Mammary epithelial cell (primary cell): ENCODE measurements at regions of chr5 and their contacts with region 1.

Region 1: DNA sequence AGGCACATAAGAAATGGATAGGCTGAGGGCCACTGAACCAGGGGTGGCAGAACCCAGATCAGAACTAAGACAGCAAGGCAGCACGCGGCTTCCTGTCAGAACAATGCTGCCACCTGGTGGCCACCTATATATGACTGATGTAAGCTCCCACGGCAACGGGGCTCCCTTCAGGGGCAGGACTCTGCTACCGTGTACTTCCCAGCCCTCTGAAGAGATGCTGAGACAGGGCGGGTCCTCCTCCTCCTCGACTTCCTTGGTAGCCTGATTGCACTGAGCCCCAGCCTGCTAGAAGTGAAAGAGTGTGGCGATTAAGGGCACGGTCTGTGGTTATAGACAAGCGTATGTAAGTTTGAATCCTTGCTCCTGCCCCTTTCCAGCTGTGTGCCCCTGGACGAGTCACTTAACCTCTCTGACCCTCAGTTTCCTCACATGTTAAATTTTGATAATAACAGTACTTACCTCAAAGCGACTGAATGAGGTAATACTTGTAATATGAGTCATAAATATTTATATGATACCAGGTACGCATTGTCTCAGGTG is 13.3 kb downstream of the RPS14 start:
- DNase-seq: peak; percentile 73
- H3K4me3 ChIP-seq: no peak overlapping the region
- H3K27ac ChIP-seq: no peak overlapping the region
- H3K4me1 ChIP-seq: peaks cover 9% of the 10 kb centered on the region
- H3K27me3 ChIP-seq: no peaks in the 10 kb centered on the region
- CTCF ChIP-seq: peak; percentile 74 to 84

Region 2: GRCh38 chr5:150000256-150000989 is 435.8 kb before region 1 on chr5 and contains the starts of genes HMGXB3 and TIGD6:
- CTCF ChIA-PET with region 1: no interaction called
- dilution Hi-C with region 1: no loop called
- in situ Hi-C with region 1: no loop called
- intact Hi-C with region 1: loop called (anchors 10 kb)
- DNase-seq: peak; percentile 93
- H3K4me3 ChIP-seq: peak within 1 kb of the TSS; percentile 60 to 92 (median 86)
- H3K27ac ChIP-seq: peak within 1 kb of the TSS; percentile 86
- H3K4me1 ChIP-seq: peaks cover 16% of the 10 kb centered on the region
- H3K27me3 ChIP-seq: no peaks in the 10 kb centered on the region
- CTCF ChIP-seq: peak in 1 of 2 donors; percentile 8
- total RNA-seq, gene HMGXB3: 46.7 to 60.0 TPM
- total RNA-seq, gene TIGD6: 5.8 to 6.0 TPM

Region 3: GRCh38 chr5:150155258-150156026 is 280.8 kb before region 1 on chr5 and contains the start of gene PDGFRB:
- CTCF ChIA-PET with region 1: no interaction called
- dilution Hi-C with region 1: no loop called
- in situ Hi-C with region 1: loop called in 1 of 2 experiments (anchors 10 kb)
- intact Hi-C with region 1: no loop called
- DNase-seq: no peak
- H3K4me3 ChIP-seq: peak within 1 kb of the TSS in 2 of 3 experiments; percentile 12 to 23
- H3K27ac ChIP-seq: no peak within 1 kb of the TSS
- H3K4me1 ChIP-seq: peaks cover 5% of the 10 kb centered on the region
- H3K27me3 ChIP-seq: no peaks in the 10 kb centered on the region
- CTCF ChIP-seq: no peak
- total RNA-seq, gene PDGFRB: 1.5 TPM in 1 of 2 donors, not detected in the other

Region 4: DNA sequence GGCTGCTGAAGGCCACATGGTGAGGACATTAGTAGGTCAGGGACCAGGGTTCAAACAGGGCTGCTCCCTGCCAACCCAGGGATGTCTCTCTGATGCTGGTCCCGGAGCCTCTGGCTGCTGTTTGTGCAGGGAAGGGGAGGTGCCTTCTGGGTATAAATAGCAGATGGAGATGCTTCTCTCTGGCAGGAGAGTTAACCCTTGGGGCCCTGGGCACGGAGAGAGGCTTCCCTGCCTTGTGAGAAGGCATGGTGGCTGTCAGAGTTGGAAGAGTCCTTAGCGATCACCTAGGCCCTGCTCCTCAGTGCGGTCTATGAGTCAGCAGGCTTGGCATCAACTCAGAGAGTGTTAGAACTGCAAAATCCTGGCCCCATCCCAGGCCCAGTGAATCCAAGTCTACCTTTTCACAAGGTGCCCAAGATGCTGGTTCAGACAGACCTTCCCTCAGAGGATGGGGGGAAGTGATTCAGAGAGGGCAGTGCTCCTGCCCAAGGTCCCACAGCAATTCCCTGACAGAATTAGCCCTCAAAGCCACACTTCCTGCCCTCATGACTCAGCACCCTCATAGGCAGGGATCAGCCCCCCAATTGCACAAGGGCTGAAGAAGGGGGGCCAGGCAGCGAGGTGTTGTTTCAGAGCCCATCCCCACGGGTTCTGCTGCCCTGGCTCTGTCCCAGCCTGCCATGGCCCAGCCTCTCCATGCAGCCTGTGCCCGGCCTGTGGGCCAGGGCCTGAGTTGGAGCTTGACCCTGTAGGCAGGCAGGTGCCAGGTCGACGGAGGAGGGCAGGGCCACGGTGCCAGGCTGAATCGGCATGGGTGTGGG is 172.2 kb before region 1 on chr5:
- CTCF ChIA-PET with region 1: no interaction called
- dilution Hi-C with region 1: no loop called
- in situ Hi-C with region 1: loop called in 1 of 2 experiments (anchors 5 kb)
- intact Hi-C with region 1: no loop called
- DNase-seq: peak; percentile 98
- H3K4me3 ChIP-seq: no peak overlapping the region
- H3K27ac ChIP-seq: no peak overlapping the region
- H3K4me1 ChIP-seq: peaks cover 30% of the 10 kb centered on the region
- H3K27me3 ChIP-seq: no peaks in the 10 kb centered on the region
- CTCF ChIP-seq: no peak

Region 5: DNA sequence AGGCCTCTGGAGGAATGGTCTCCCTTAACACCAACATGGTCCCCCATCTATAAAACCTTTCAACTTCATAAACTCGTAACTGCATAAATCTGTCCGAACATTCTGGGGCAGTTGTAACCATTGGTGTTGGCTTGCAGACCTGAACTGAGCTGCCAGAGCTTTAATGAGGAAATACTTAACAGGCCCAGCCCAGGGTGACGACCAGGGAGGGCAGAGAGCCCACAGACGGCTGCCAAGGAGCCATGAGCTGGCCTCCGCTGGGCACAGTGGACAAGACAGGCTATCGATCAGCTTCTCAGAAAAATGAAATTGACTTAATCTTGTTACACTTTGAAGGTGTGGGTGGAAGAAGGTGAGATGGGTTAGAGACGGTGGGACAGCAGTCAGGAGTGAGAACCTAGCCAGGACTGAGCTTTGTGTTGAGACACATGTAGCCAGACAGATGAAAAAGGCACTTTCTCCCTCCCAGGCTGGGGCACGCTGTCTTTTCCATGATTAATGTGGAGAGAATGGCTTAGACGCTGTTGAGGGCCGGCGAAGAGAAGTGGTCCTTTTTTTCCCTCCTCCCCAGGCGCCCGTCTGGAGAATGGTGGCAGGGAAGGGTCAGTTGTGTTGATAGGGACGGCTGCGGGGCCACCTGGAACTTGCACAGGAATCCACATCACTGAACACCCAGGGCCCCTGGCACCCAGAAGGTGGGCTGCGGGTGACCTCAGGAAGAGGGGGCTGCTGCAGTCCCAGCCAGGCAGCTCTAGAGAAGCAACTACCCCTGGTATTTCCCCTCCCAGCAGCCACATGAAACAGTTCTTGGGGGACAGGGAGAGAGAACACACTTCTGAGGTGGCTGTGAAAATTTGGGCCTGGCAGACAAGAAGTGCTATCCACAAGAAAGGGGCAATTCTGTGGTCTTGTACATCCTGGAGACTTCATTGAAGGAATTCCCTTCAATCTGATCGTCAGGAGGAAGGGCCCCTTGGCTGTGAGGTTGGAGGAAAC is 106.0 kb before region 1 on chr5:
- CTCF ChIA-PET with region 1: no interaction called
- dilution Hi-C with region 1: no loop called
- in situ Hi-C with region 1: no loop called
- intact Hi-C with region 1: no loop called
- DNase-seq: no peak
- H3K4me3 ChIP-seq: no peak overlapping the region
- H3K27ac ChIP-seq: no peak overlapping the region
- H3K4me1 ChIP-seq: no peaks in the 10 kb centered on the region
- H3K27me3 ChIP-seq: no peaks in the 10 kb centered on the region
- CTCF ChIP-seq: no peak

Region 6: DNA sequence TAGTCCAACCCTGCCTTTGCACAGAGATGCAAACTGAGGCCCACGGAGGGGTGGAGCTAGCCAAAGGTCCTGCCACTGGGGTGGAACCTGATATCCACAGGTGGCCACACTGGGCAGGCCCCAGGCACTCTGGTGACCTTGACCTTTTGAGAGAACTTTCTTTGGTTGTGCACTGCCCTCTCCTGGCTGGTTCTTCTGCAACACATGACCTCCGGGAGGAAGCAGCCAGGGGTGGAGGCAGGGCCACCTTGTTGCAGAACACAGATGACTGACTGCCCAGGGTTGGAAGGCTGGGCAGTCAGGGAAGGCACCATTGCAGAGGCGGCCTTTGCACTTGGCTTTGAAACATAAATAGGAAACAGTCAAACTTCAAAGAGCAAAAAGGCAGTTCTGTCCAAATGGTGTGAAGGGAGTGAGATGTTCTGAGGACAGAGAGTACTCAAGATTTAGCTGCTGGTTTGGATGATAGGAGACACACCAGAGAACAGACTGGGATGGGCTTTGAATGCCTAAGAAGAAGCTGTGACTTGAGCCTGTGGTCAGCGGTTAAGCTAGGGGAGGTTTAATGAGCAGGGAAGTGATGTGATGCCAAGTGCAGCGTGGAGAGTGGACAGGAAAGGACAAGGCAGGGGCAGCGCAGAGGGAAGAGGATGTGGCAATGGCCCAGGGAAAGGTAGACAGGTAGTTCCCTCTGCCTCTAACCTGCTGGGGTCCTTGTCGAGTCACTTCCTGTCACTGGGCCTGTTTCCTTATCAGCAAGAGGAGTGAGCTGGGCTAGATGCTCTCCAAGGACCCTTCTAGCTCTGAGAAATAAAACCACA is 85.5 kb before region 1 on chr5:
- CTCF ChIA-PET with region 1: interaction called, 4 read pairs
- dilution Hi-C with region 1: no loop called
- in situ Hi-C with region 1: no loop called
- intact Hi-C with region 1: loop called (anchors 1 kb)
- DNase-seq: peak; percentile 55
- H3K4me3 ChIP-seq: no peak overlapping the region
- H3K27ac ChIP-seq: no peak overlapping the region
- H3K4me1 ChIP-seq: peaks cover 10% of the 10 kb centered on the region
- H3K27me3 ChIP-seq: no peaks in the 10 kb centered on the region
- CTCF ChIP-seq: peak; percentile 57 to 84

Region 7: DNA sequence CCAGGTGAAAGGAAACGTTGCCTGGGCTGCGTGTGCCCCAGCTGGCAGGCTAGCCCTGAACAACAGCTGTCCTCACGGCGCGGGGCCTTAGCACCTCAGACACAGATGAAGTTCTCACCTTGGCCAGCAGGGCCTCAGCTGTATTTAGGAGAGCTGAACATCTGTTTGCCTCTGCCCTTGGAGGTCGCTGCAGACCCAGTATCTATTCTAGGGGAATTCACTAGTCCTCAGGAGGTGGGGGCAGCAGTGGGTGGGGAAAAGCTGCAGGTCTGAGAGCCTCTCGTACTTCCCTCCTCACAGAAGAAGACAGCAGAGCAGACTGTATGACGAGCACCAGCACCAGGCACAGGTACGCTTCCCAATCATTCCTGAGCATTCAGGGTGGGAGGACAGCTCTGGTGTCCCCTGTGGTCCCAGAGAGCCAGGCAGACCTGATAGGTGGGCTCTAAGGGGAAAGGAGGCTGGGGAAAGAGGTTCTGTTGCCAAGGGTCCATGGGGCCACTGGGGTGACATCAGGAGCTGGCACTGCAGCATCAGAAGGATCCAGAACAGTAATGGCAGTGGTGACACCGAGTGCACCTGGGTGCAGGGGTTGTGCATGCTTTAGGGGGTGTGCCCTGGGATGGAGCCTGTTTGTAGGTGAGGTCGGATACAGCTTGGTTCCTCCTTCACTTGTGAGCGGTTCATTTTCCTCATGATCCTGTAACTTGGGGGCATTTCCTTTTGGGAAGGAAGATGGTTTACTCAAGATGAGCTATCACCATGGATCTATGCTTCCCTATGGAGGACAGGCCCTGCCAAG is 37.3 kb before region 1 on chr5:
- CTCF ChIA-PET with region 1: interaction called, 3 read pairs
- dilution Hi-C with region 1: no loop called
- in situ Hi-C with region 1: no loop called
- intact Hi-C with region 1: loop called (anchors 1 kb)
- DNase-seq: no peak
- H3K4me3 ChIP-seq: no peak overlapping the region
- H3K27ac ChIP-seq: no peak overlapping the region
- H3K4me1 ChIP-seq: no peaks in the 10 kb centered on the region
- H3K27me3 ChIP-seq: no peaks in the 10 kb centered on the region
- CTCF ChIP-seq: peak; percentile 27 to 29